ENCODE measurements at regions of chr3 and their contacts with region 1.

Region 1: GRCh38 chr3:127672516-127673190 is at the start of gene ABTB1:
- DNase-seq: peak; percentile 73 to 88 (median 83)
- ATAC-seq: peak; percentile 93
- H3K4me3 ChIP-seq: peak within 1 kb of the TSS; percentile 86
- H3K4me3 Mint-ChIP-seq: peak within 1 kb of the TSS; percentile 88 to 96 (median 94)
- H3K27ac ChIP-seq: peak within 1 kb of the TSS; percentile 98
- H3K27ac Mint-ChIP-seq: peak within 1 kb of the TSS; percentile 92 to 98 (median 97)
- H3K4me1 ChIP-seq: peaks cover 13 to 17% of the 10 kb centered on the region in 2 donors
- H3K4me1 Mint-ChIP-seq: peaks cover 17 to 37% (median 33%) of the 10 kb centered on the region in 7 donors
- H3K27me3 ChIP-seq: no peaks in the 10 kb centered on the region
- H3K27me3 Mint-ChIP-seq: no peaks in the 10 kb centered on the region
- total RNA-seq, gene ABTB1: 26.7 to 182 (median 124) TPM

Region 2: GRCh38 chr3:126703512-126704462 is 968.9 kb before region 1 on chr3 and contains the start of gene CHCHD6:
- CTCF ChIA-PET with region 1: no interaction called
- POLR2A ChIA-PET with region 1: interaction called, 3 read pairs
- intact Hi-C with region 1: loop called in 1 of 2 experiments (anchors 2 kb)
- DNase-seq: peak; percentile 92 to 99 (median 96)
- ATAC-seq: peak; percentile 99
- H3K4me3 ChIP-seq: peak within 1 kb of the TSS; percentile 82
- H3K4me3 Mint-ChIP-seq: peak within 1 kb of the TSS; percentile 83 to 99 (median 97)
- H3K27ac ChIP-seq: peak within 1 kb of the TSS; percentile 69
- H3K27ac Mint-ChIP-seq: peak within 1 kb of the TSS; percentile 71 to 98 (median 92)
- H3K4me1 ChIP-seq: peaks cover 6 to 13% of the 10 kb centered on the region in 2 donors
- H3K4me1 Mint-ChIP-seq: peaks cover 17 to 28% (median 21%) of the 10 kb centered on the region in 7 donors
- H3K27me3 ChIP-seq: peaks cover 0 to 5% of the 10 kb centered on the region in 2 donors
- H3K27me3 Mint-ChIP-seq: peaks cover 10 to 42% (median 19%) of the 10 kb centered on the region in 5 donors
- total RNA-seq, gene CHCHD6: 5.4 to 14.0 (median 10.0) TPM

Region 3: DNA sequence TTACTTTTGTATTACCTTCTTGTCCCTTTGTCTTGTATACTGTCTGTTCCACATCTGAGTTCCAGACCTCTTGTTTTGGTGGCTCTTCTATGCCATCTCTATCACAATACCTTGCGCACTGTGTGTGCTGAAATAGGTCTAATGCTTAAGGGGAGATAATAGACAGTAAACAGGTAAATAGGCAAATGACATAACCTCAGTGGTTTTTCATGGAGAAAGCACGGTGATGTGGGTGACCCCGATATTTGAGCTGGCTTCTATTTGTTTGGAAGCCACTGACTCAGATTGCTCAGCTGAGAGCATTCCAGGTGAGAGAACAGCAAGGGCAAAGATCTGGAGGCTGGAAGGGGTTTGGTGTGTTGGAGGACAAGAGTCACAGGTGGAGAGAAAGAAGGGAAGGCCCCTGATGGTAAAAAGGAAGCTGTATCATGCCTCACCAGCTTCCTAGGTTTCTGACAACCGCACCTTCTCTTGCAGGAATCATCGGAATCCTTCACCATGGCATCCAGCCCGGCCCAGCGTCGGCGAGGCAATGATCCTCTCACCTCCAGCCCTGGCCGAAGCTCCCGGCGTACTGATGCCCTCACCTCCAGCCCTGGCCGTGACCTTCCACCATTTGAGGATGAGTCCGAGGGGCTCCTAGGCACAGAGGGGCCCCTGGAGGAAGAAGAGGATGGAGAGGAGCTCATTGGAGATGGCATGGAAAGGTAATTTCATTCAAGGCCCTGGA is 73.6 kb before region 1 on chr3:
- CTCF ChIA-PET with region 1: no interaction called
- POLR2A ChIA-PET with region 1: interaction called, 11 read pairs
- intact Hi-C with region 1: loop called (anchors 1 kb)
- DNase-seq: no peak
- ATAC-seq: no peak
- H3K4me3 ChIP-seq: peak overlapping the region; percentile 75
- H3K4me3 Mint-ChIP-seq: peak overlapping the region; percentile 62 to 89 (median 82)
- H3K27ac ChIP-seq: peak overlapping the region; percentile 70
- H3K27ac Mint-ChIP-seq: peak overlapping the region; percentile 57 to 93 (median 86)
- H3K4me1 ChIP-seq: peaks cover 7% of the 10 kb centered on the region in 2 donors
- H3K4me1 Mint-ChIP-seq: peaks cover 13 to 57% (median 16%) of the 10 kb centered on the region in 7 donors
- H3K27me3 ChIP-seq: no peaks in the 10 kb centered on the region
- H3K27me3 Mint-ChIP-seq: no peaks in the 10 kb centered on the region

Region 4: GRCh38 chr3:127684871-127685707 is 12.4 kb after region 1 on chr3:
- CTCF ChIA-PET with region 1: no interaction called
- POLR2A ChIA-PET with region 1: interaction called, 10 read pairs
- intact Hi-C with region 1: loop called in 1 of 2 experiments (anchors 1 kb)
- DNase-seq: no peak
- ATAC-seq: no peak
- H3K4me3 ChIP-seq: no peak overlapping the region
- H3K4me3 Mint-ChIP-seq: no peak overlapping the region
- H3K27ac ChIP-seq: no peak overlapping the region
- H3K27ac Mint-ChIP-seq: no peak overlapping the region
- H3K4me1 ChIP-seq: no peaks in the 10 kb centered on the region
- H3K4me1 Mint-ChIP-seq: peaks cover 6 to 19% (median 15%) of the 10 kb centered on the region in 7 donors
- H3K27me3 ChIP-seq: no peaks in the 10 kb centered on the region
- H3K27me3 Mint-ChIP-seq: no peaks in the 10 kb centered on the region

Region 5: DNA sequence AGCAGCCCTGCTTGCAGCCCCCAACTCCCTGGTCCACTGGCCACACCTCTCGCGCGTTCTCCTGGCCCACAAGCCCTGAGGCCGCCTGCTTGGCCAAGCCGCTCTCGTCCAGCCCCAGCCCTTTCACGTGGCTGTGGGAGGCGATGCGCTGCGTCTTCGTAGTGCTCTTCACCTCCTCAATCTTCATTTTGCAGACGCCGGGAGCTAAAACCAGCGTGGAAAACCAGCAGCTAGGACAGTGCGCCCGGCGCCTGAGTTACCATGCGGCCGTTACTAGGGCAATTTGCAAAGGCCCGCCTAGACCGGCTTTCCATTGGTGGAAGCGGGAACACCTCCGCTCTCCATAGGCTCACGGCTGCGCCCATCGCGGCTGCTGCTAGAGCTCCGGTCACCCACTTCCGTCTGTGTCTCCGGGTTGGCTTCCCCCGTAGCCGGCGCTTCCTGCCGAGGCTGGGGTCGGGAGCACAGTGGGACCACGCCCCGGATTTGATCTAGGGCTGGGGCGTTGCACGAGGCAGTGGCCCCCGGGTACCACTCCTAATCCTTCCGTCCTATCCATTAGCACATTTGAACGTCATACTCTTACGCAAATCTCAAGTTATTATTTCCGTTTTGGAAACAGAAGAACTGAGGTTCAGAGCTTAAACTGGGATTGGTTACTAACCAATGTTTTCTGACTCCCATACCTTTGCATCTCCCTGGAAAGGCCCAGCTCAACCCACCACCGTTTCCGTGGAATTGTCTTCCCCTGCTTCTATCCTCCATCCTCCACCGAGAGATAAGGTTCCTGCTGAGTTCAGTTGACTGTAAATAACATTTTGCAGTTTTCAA is 451.1 kb after region 1 on chr3 and contains the start of gene RUVBL1:
- CTCF ChIA-PET with region 1: no interaction called
- POLR2A ChIA-PET with region 1: interaction called, 5 read pairs
- intact Hi-C with region 1: loop called (anchors 2 to 10 kb)
- DNase-seq: peak; percentile 85 to 99 (median 98)
- ATAC-seq: peak; percentile 97
- H3K4me3 ChIP-seq: peak within 1 kb of the TSS; percentile 83
- H3K4me3 Mint-ChIP-seq: peak within 1 kb of the TSS; percentile 82 to 100 (median 98)
- H3K27ac ChIP-seq: peak within 1 kb of the TSS; percentile 84
- H3K27ac Mint-ChIP-seq: peak within 1 kb of the TSS; percentile 95 to 99 (median 97)
- H3K4me1 ChIP-seq: peaks cover 13 to 15% of the 10 kb centered on the region in 2 donors
- H3K4me1 Mint-ChIP-seq: peaks cover 23 to 40% (median 27%) of the 10 kb centered on the region in 7 donors
- H3K27me3 ChIP-seq: no peaks in the 10 kb centered on the region
- H3K27me3 Mint-ChIP-seq: peaks cover 0 to under 1% (median 0%) of the 10 kb centered on the region in 5 donors
- total RNA-seq, gene RUVBL1: 16.8 to 59.3 (median 22.5) TPM